ENCODE measurements at regions of chr7 and their contacts with region 1.

Region 1: DNA sequence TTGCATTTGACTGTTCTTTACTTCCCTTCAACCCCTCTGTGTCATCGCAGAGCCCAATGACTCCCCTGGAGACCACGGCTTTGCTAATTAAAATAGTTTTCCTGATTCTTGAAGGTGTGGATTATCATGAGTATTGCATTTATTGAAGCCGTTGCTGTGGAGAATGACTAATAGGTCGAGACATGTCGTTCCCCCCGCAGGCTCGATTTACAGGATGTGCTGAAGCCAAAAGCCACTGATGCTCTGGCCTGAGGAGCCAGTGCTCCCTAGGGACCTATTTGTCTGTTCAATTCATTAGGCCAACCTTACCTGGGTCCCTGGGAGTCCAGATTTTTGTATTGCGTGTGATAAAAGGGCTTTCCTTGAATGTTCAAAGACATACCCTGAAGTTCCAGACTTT is 102.3 kb downstream of the NPTX2 start:
- DNase-seq: peak in 1 of 2 experiments; percentile 39
- H3K4me3 ChIP-seq: no peak overlapping the region
- H3K27ac ChIP-seq: no peak overlapping the region
- H3K4me1 ChIP-seq: no peaks in the 10 kb centered on the region
- H3K27me3 ChIP-seq: peaks cover 60% of the 10 kb centered on the region
- CTCF ChIP-seq: no peak

Region 2: GRCh38 chr7:98409843-98410242 is 309.6 kb before region 1 on chr7:
- CTCF ChIA-PET with region 1: interaction called, 10 read pairs
- POLR2A ChIA-PET with region 1: no interaction called
- intact Hi-C with region 1: no loop called
- DNase-seq: no peak
- H3K4me3 ChIP-seq: no peak overlapping the region
- H3K27ac ChIP-seq: peak overlapping the region; percentile 28; the same call in 1 of the 2 replicates
- H3K4me1 ChIP-seq: 0 out of 2 replicates have a peak, but pooled peaks cover 6% of the 10 kb centered on the region
- H3K27me3 ChIP-seq: no peaks in the 10 kb centered on the region
- CTCF ChIP-seq: no peak

Region 3: GRCh38 chr7:99050971-99051370 is 331.6 kb after region 1 on chr7:
- CTCF ChIA-PET with region 1: no interaction called
- POLR2A ChIA-PET with region 1: no interaction called
- intact Hi-C with region 1: no loop called
- DNase-seq: no peak
- H3K4me3 ChIP-seq: no peak overlapping the region
- H3K27ac ChIP-seq: peak overlapping the region; percentile 52
- H3K4me1 ChIP-seq: peaks cover 18% of the 10 kb centered on the region
- H3K27me3 ChIP-seq: no peaks in the 10 kb centered on the region
- CTCF ChIP-seq: no peak

Measured in PC-9 (cell line).